ENCODE measurements at regions of chr20 and their contacts with region 1.

Region 1: GRCh38 chr20:46367967-46368901 is 38.2 kb downstream of the ELMO2 start:
- DNase-seq: peak; percentile 77 to 87 (median 82)
- ATAC-seq: peak; percentile 29
- H3K4me3 ChIP-seq: no peak overlapping the region
- H3K27ac ChIP-seq: peak overlapping the region; percentile 63
- H3K4me1 ChIP-seq: peaks cover 16 to 26% of the 10 kb centered on the region in 2 experiments
- H3K27me3 ChIP-seq: no peaks in the 10 kb centered on the region
- CTCF ChIP-seq: peak in 1 of 3 experiments; percentile 4; a peak in 1 of 6 replicates
- EP300 ChIP-seq: peak; percentile 68
- POLR2A ChIP-seq: no peak
- RAD21 ChIP-seq: no peak

Region 2: DNA sequence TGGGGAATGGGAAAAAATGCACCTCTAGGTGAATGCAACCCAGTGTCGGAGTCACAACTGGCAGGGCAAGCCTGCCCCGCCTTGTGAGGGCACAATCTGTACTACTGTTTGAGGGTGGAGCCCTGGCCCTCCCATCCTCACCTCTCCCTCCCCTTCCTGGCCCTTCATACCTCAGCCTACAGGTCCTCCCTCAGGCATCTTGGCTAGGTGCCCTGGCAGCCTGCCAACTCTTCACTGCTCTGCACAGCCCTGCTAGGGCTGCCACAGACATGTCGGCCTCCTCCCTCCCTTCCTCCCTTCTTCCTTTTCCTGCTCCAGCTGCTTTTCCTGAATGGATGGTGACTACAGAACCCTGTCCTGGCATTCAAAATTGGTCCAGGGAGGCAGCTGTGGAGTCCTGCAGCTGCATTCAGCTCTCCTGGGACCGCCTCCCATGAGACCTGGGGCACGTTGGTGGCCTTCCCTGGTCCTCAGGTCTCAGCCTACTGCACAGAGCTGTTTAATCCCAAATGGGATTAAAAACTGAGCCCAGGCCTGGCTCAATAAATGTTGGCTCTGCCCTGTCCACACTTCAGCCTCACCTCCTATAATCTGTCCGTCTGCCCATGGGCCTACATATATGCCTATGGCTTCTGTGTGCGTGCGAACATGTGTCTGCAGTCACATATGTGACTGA is 112.7 kb before region 1 on chr20:
- CTCF ChIA-PET with region 1: no interaction called
- POLR2A ChIA-PET with region 1: no interaction called
- in situ Hi-C with region 1: no loop called
- intact Hi-C with region 1: no loop called
- DNase-seq: peak; percentile 43 to 61 (median 45)
- ATAC-seq: peak; percentile 79
- H3K4me3 ChIP-seq: no peak overlapping the region
- H3K27ac ChIP-seq: no peak overlapping the region
- H3K4me1 ChIP-seq: peaks cover 0 to 6% of the 10 kb centered on the region in 2 experiments; a peak in 1 of 5 replicates
- H3K27me3 ChIP-seq: peaks cover 4 to 32% of the 10 kb centered on the region in 2 experiments; a peak in 4 of 5 replicates
- CTCF ChIP-seq: no peak
- EP300 ChIP-seq: no peak
- POLR2A ChIP-seq: no peak
- RAD21 ChIP-seq: no peak

Region 3: DNA sequence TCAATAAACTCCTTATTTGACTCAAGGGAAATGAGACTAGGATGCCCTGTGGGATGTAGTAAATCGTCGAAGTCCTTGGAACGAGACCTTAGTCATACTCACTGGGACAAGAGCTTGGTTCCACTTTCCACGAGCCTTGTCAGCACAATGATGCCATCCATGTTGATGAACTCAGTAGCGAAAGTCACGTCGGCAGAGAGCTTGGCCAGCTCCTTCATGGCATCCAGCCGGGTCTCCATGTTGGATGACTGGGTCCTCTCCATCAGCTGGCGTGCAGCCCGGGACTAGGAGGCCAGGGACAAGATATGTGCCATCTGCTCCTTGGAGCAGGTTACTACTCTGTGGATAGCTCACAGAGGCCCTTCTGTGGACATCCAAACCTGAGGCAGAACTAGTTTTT is 20.7 kb after region 1 on chr20:
- CTCF ChIA-PET with region 1: no interaction called
- POLR2A ChIA-PET with region 1: no interaction called
- in situ Hi-C with region 1: no loop called
- intact Hi-C with region 1: no loop called
- DNase-seq: no peak
- ATAC-seq: no peak
- H3K4me3 ChIP-seq: no peak overlapping the region
- H3K27ac ChIP-seq: no peak overlapping the region
- H3K4me1 ChIP-seq: no peaks in the 10 kb centered on the region
- H3K27me3 ChIP-seq: no peaks in the 10 kb centered on the region
- CTCF ChIP-seq: no peak
- EP300 ChIP-seq: no peak
- POLR2A ChIP-seq: no peak
- RAD21 ChIP-seq: no peak

Region 4: GRCh38 chr20:46400828-46401477 is 32.7 kb after region 1 on chr20:
- CTCF ChIA-PET with region 1: no interaction called
- POLR2A ChIA-PET with region 1: interaction called, 7 read pairs
- in situ Hi-C with region 1: loop called (anchors 5 kb)
- intact Hi-C with region 1: no loop called
- DNase-seq: peak in 1 of 4 experiments; percentile 17
- ATAC-seq: peak; percentile 42; the same call in 2 of the 3 replicates
- H3K4me3 ChIP-seq: no peak overlapping the region
- H3K27ac ChIP-seq: no peak overlapping the region
- H3K4me1 ChIP-seq: peaks cover 16 to 26% of the 10 kb centered on the region in 2 experiments
- H3K27me3 ChIP-seq: no peaks in the 10 kb centered on the region
- CTCF ChIP-seq: no peak
- EP300 ChIP-seq: peak; percentile 20; the same call in 1 of the 2 replicates
- POLR2A ChIP-seq: no peak
- RAD21 ChIP-seq: no peak